ENCODE measurements at regions of chr3 and their contacts with region 1.

Region 1: DNA sequence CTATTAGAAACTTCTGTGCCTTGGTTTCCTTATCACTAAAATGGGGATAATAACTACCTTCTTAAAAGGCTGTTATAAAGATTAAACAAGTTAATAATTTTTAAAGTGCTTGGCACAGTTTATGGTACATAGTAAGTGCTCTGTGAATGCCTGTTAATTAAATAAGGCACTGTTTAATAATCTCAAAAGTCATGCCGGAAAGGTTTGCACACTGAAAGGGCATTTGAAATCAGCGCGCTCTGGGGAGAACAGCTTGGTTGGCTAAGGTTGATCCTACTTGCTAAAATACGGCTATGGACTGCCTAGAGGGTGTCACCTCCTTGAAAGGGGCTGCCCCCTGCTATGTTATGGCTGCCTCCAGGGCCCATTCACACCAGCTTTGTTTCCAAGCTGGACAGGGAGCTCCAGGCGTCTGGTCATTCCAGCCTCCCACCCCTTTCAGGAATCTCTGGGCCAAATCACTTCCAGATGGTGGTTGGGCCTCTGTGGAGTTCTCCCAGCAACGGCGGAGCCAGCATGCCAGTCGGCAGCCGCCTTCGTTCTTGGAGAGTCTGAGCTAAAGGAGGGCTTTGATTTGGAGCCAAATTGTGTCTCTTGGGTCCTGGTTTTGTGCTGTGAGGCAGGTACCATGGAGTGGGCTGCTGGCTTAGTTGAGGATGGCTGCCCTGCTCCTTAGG is 5.9 kb downstream of the FLNB start:
- DNase-seq: peak; percentile 86 to 87
- ATAC-seq: peak; percentile 83
- H3K4me3 ChIP-seq: no peak overlapping the region
- H3K27ac ChIP-seq: peak overlapping the region in 1 of 2 donors; percentile 90
- H3K4me1 ChIP-seq: peaks cover 0 to 1% of the 10 kb centered on the region in 2 donors
- H3K27me3 ChIP-seq: no peaks in the 10 kb centered on the region

Region 2: GRCh38 chr3:58049143-58049785 is 35.2 kb after region 1 on chr3:
- intact Hi-C with region 1: loop called in 1 of 2 experiments (anchors 5 kb)
- DNase-seq: no peak
- ATAC-seq: no peak
- H3K4me3 ChIP-seq: no peak overlapping the region
- H3K27ac ChIP-seq: peak overlapping the region in 1 of 2 donors; percentile 15
- H3K4me1 ChIP-seq: peaks cover 0 to 6% of the 10 kb centered on the region in 2 donors
- H3K27me3 ChIP-seq: no peaks in the 10 kb centered on the region

Region 3: DNA sequence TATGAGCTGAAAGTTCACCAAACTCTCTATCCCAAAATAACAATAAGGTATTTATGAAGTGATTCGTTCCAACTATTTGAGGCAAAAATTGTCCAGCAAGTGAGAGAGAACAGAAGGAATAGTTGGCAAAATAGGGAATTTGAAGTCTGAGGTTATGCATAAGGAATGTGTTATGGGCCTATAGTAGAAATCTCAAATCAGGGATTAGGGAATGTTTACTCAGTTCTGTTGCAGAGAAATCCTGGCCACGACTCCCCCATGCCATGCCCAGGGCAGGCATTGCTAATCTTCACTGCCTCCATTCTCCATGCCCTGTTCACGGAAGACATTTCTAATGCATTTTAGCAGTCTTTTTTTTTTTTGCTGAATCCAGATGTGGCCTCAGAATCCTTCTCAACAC is 52.7 kb after region 1 on chr3:
- intact Hi-C with region 1: loop called in 1 of 2 experiments (anchors 5 kb)
- DNase-seq: no peak
- ATAC-seq: no peak
- H3K4me3 ChIP-seq: no peak overlapping the region
- H3K27ac ChIP-seq: peak overlapping the region; percentile 28 to 73
- H3K4me1 ChIP-seq: peaks cover 4 to 10% of the 10 kb centered on the region in 2 donors
- H3K27me3 ChIP-seq: no peaks in the 10 kb centered on the region

Region 4: DNA sequence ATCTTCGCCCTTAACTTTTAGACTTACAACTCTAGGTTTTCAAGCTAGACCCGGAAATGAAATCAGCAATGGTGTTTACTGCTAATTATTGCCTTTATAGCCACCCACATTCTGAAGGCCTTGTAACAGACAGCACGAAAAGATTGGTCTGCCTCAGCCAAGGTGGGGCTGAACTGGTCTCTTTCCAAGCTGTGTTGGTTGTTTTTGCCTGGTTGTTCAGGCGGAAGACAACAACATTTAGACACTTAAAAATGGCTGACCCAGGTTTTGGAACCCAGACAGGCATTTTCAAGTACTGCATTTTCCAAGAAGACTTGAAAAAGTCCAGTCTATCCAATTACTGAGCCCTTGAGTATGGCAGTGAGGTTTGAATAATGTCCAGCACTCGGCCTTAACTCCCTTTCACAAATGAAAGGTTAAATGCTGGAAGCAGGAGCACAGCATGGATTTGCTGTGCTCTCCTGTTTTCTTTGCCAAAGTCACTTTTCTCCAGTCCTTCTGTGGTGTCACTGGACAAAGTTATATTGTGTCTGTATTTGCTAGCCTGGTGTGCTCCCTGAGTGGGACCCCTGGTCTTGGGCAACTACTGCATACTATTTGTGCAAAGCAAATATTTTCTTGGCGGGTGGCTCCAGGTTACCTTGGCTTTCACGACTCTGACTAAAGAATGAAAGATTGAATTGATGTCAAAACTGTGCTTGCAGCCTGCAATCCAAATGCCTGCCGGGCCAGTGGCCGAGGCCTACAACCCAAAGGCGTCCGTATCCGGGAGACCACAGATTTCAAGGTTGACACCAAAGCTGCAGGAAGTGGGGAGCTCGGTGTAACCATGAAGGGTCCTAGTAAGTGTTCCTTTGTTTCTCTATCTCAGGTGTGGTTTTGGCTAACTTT is 87.6 kb after region 1 on chr3:
- intact Hi-C with region 1: loop called (anchors 5 to 10 kb)
- DNase-seq: no peak
- ATAC-seq: peak; percentile 33
- H3K4me3 ChIP-seq: no peak overlapping the region
- H3K27ac ChIP-seq: peak overlapping the region; percentile 34 to 85
- H3K4me1 ChIP-seq: peaks cover 2 to 6% of the 10 kb centered on the region in 2 donors
- H3K27me3 ChIP-seq: no peaks in the 10 kb centered on the region

Region 5: GRCh38 chr3:58135712-58136543 is 121.8 kb after region 1 on chr3:
- intact Hi-C with region 1: loop called in 1 of 2 experiments (anchors 5 kb)
- DNase-seq: no peak
- ATAC-seq: no peak
- H3K4me3 ChIP-seq: no peak overlapping the region
- H3K27ac ChIP-seq: no peak overlapping the region
- H3K4me1 ChIP-seq: no peaks in the 10 kb centered on the region
- H3K27me3 ChIP-seq: no peaks in the 10 kb centered on the region

Measured in aorta (tissue), 5 donors.